ENCODE measurements at regions of chr4 and their contacts with region 1.

Region 1: DNA sequence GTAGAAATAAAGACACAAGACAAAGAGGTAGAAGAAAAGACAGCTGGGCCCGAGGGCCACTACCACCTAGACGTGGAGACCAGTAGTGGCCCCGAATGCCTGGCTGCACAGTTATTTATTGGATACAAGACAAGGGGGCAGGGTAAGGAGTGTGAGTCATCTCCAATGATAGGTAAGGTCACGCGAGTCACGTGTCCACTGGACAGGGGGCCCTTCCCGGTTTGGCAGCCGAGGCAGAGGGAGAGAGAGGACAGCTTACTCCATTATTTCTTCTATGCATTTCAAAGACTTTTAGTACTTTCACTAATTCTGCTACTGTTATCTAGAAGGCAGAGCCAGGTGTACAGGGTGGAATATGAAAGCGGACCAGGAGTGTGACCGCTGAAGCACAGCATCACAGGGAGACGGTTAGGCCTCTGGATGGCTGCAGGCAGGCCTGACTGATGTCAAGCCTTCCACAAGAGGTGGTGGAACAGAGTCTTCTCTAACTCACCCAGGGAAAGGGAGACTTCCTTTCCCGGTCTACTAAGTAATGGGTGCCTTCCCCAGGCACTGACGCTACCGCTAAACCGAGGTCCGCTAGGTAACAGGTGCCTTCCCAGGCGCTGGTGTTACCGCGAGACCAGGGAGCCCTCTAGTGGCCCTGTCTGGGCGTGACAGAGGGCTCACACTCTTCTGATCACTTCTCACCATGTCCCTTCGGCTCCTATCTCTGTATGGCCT is 44.9 kb downstream of the ZBTB49 start:
- DNase-seq: peak; percentile 85
- H3K4me3 ChIP-seq: no peak overlapping the region
- H3K27ac ChIP-seq: no peak overlapping the region
- H3K4me1 ChIP-seq: peaks cover 9% of the 10 kb centered on the region
- CTCF ChIP-seq: peak; percentile 88

Region 2: DNA sequence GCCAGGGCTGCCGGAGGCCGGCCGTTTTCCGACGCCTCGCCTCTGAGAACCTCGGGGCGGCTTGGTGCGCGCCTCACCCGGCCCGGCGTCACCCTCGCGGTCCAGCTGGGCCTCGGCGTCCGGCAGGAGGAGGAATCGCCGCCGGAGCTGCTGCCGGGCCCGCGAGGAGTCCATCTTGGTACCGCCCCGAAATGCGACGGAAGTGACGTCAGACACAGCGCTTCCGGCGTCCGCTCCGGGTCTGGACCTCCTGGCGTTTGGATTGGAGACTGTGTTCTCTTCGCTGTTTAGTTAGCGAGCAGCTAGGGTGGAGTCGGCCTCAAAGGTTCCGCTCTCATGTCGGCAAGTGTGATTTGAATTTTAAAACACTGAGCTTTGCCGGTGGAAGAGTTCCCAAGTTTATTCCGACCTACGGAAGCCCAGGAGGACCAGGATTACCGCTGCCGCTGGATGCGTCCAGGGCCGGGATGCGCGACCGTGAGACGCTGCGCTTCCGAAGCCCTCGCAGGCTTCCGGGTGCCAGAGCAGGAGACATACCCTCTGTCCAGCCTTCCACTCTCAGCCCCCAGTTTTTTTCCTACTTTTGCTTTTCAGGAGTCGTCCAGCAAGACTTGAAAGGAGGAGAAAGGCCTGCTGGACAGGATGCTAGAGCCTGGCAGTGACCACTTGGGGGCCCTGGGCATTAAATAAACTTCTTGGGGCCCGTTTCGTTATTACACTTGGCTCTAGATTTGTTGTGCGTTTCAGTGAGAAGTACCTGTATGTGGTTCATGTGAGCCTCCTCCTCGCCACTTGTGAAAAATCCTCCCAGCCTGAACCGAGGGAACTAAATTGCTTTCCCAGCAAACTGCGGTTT is 86.7 kb before region 1 on chr4 and contains the start of gene TMEM128:
- CTCF ChIA-PET with region 1: interaction called, 3 read pairs
- POLR2A ChIA-PET with region 1: interaction called, 3 read pairs
- intact Hi-C with region 1: loop called (anchors 1 kb)
- DNase-seq: peak; percentile 94
- H3K4me3 ChIP-seq: peak within 1 kb of the TSS; percentile 95
- H3K27ac ChIP-seq: peak within 1 kb of the TSS; percentile 46
- H3K4me1 ChIP-seq: peaks cover 13% of the 10 kb centered on the region
- CTCF ChIP-seq: peak; percentile 23; the same call in 1 of the 2 replicates
- total RNA-seq, gene TMEM128: 11.2 and 13.9 TPM in 2 replicates

Region 3: DNA sequence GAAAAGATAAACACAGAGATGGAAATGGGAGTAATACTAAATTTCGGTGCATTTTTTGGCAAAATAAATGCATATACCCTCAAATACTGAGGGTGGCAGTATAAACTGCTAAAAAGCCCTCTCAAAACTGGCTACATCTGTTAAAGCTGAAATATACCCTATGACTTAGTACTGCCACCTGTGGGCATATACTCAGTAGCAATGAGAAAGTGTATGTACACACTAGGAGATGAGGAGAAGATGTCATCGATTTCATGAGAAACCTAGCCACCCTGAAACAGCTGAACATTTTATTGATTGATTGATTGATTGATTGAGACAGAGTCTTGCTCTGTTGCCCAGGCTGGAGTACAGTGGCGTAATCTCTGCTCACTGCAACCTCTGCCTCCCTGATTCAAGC is 74.7 kb before region 1 on chr4:
- CTCF ChIA-PET with region 1: interaction called, 3 read pairs
- POLR2A ChIA-PET with region 1: interaction called, 4 read pairs
- intact Hi-C with region 1: loop called (anchors 1 kb)
- DNase-seq: peak; percentile 87
- H3K4me3 ChIP-seq: no peak overlapping the region
- H3K27ac ChIP-seq: no peak overlapping the region
- H3K4me1 ChIP-seq: peaks cover 3% of the 10 kb centered on the region
- CTCF ChIP-seq: peak; percentile 97

Region 4: GRCh38 chr4:4430492-4431197 is 95.7 kb after region 1 on chr4:
- CTCF ChIA-PET with region 1: no interaction called
- POLR2A ChIA-PET with region 1: no interaction called
- intact Hi-C with region 1: loop called (anchors 2 kb)
- DNase-seq: peak; percentile 86
- H3K4me3 ChIP-seq: no peak overlapping the region
- H3K27ac ChIP-seq: no peak overlapping the region
- H3K4me1 ChIP-seq: peaks cover 24% of the 10 kb centered on the region
- CTCF ChIP-seq: peak; percentile 92

Region 5: GRCh38 chr4:4470208-4470607 is 135.2 kb after region 1 on chr4:
- CTCF ChIA-PET with region 1: no interaction called
- POLR2A ChIA-PET with region 1: no interaction called
- intact Hi-C with region 1: no loop called
- DNase-seq: no peak
- H3K4me3 ChIP-seq: no peak overlapping the region
- H3K27ac ChIP-seq: no peak overlapping the region
- H3K4me1 ChIP-seq: no peaks in the 10 kb centered on the region
- CTCF ChIP-seq: no peak

Region 6: DNA sequence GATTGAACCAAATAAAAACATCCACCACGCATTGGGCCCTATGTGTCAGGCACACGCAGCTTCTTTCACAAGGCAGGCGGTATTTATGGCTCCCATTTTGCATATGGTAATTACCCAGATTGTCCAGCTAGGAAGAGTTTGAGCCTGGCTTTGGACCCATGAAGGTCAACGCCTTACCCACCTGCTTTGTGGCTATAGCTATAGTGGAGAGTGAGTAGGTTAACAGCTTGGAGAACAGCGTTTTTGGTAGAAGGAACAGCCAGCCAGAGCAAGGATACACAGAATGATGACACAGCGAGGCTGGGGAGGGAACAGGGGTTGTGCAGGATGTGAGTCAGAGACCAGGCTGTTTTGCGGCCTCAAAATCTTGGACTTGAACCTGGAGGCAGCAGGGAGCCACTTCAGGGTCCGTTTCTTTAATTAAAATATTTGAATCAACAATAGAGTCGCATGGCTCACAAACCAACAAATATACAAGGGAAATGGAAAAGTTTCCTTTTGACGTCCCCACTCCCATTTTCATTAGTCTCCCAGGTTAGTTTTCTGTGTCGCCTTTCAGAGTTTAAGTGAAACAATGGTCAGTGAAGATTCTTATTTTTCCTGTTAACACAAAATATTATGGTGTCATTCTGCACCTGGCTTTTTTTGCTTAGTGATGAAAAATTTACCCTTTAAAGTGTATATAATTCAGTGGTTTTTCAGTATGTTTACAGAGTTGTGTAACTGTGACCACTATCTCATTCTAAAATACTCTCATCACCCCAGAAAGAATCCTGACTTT is 325.1 kb after region 1 on chr4:
- CTCF ChIA-PET with region 1: no interaction called
- POLR2A ChIA-PET with region 1: no interaction called
- intact Hi-C with region 1: no loop called
- DNase-seq: no peak
- H3K4me3 ChIP-seq: no peak overlapping the region
- H3K27ac ChIP-seq: no peak overlapping the region
- H3K4me1 ChIP-seq: no peaks in the 10 kb centered on the region
- CTCF ChIP-seq: no peak

Measured in OCI-LY7 (cell line).